Right ventricle myocardium inferior (tissue), 1 donor: ENCODE measurements at regions of chr7 and their contacts with region 1.

Region 1: DNA sequence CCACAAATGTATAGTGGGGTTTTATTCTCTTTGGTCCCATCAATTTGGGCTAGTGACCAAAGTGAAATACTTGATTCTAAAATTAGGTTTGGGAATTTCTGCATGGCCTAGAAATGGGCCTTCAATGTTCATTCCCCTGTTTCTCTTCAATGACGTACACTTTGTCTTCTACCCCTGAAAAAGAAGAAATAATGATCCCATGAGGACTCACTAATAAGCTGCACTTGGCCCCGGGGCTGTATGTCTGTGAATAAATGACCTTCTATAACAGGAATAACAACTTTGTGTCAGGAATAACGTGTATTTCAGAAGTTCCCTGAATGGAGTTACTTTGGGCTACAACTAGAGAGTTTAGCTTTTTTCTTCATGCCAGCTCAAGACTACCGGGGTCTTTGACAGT is 20.2 kb downstream of the OR6B1 start:
- DNase-seq: no peak
- ATAC-seq: peak; percentile 48

Region 2: GRCh38 chr7:143901668-143902331 is 118.6 kb before region 1 on chr7 and contains the start of gene TCAF1:
- intact Hi-C with region 1: loop called (anchors 5 kb)
- DNase-seq: peak; percentile 96
- ATAC-seq: peak; percentile 99
- total RNA-seq, gene TCAF1: 38.7 TPM